HEK293 (cell line): ENCODE measurements at regions of chr9 and their contacts with region 1.

Region 1: DNA sequence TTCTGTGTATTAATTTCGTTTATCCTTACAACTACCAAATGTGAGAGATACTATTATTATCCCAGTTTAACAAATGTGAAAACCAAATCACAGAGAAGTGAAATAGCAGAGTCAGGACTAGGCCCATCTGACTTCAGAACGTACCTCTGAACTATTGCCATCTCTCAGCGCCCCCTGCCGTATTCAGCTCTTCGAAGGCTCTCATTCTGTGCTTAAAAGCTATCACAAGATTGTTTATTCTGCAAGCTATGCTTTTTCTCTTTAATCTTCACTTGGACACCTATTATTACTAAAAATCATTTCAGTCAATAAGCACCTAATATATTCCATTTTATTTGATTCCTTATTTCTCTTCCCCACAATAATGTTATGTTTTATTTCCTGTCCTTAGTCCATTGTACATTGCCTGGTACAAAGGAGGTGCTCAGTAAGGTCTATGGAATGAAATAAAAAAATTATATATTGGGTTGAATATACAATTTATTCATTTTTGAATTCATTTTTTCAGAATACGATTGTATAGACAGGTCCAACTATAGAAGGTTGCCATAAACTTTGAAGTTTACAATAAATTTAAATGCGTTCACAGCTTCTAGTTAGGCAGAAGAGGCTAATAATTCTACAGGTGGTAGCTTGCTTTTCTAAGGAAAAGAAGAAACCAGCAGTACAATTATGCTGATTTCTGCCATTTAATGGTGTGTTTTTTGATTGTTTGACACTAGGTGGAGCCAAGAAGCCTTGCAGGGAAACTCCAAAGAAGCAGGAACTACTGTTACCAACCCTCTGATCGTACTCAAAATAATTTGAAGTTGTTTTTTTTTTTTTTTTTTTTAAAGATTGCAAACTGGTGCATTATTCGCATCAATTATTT is 202.2 kb upstream of the DMRTA1 start:
- H3K4me3 ChIP-seq: no peak overlapping the region
- H3K27ac ChIP-seq: no peak overlapping the region
- H3K4me1 ChIP-seq: peaks cover 18% of the 10 kb centered on the region
- CTCF ChIP-seq: peak; percentile 22; the same call in 1 of the 2 replicates

Region 2: GRCh38 chr9:21709464-21710058 is 534.8 kb before region 1 on chr9:
- CTCF ChIA-PET with region 1: no interaction called
- POLR2A ChIA-PET with region 1: no interaction called
- H3K4me3 ChIP-seq: no peak overlapping the region
- H3K27ac ChIP-seq: no peak overlapping the region
- H3K4me1 ChIP-seq: no peaks in the 10 kb centered on the region
- CTCF ChIP-seq: 0 out of 2 replicates have a peak, but pooled peaks have one; percentile 14

Region 3: DNA sequence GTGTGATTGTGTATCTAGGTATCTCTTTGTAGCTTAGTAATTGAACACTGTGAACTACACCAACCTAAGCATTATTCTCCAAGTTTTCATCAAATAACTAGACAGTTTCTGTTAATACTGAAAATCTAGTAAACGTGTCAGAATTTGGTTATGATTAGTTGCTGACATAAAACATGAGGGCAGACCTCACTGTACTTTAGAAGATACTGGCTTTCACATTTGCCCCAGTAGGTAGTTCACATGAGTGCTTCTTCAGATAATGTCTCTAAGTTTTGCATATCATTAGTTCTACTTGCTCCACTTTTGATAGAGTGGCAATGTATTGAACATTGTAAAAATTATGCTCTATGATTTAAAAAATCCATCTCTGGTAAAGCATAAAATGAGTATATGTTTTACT is 242.3 kb before region 1 on chr9:
- CTCF ChIA-PET with region 1: interaction called, 65 read pairs
- POLR2A ChIA-PET with region 1: interaction called, 51 read pairs
- H3K4me3 ChIP-seq: no peak overlapping the region; the same call in 1 of the 2 replicates
- H3K27ac ChIP-seq: no peak overlapping the region
- H3K4me1 ChIP-seq: peaks cover 16% of the 10 kb centered on the region; the same call in 1 of the 2 replicates
- CTCF ChIP-seq: no peak

Region 4: GRCh38 chr9:22052376-22052945 is 191.9 kb before region 1 on chr9:
- CTCF ChIA-PET with region 1: interaction called, 29 read pairs
- POLR2A ChIA-PET with region 1: no interaction called
- H3K4me3 ChIP-seq: no peak overlapping the region
- H3K27ac ChIP-seq: peak overlapping the region; percentile 64
- H3K4me1 ChIP-seq: peaks cover 15% of the 10 kb centered on the region
- CTCF ChIP-seq: no peak

Region 5: DNA sequence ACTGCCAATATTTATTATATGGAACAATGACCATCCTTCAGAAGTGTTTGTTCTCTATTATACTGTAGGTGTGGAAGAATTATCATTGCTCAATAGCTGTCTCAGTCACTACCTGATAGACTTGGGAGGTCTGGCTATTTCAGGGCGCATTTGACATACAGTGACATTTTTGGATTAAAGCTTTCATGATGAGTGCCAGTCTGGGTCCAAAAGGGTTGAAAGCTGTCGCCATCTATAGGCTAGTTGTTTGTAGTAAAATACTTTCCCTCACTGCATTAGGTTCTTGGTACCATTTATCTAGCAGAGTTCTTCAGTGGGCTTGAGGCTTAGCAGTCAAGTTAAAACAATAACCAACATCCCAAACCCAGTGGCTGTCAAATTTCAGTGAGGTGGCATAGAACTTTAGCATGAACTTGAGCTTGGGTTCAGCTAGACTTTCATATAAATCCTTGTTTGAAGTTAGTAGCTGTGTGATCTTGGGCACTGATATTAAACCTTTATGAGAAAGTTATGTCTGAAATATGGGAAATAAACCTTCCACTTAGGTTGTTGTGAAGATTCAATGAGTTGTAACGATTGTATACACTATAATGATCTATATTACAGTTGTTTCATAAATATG is 124.7 kb before region 1 on chr9:
- CTCF ChIA-PET with region 1: interaction called, 46 read pairs
- POLR2A ChIA-PET with region 1: no interaction called
- H3K4me3 ChIP-seq: no peak overlapping the region
- H3K27ac ChIP-seq: no peak overlapping the region
- H3K4me1 ChIP-seq: peaks cover 14% of the 10 kb centered on the region; the same call in 1 of the 2 replicates
- CTCF ChIP-seq: no peak

Region 6: GRCh38 chr9:22175972-22176545 is 68.3 kb before region 1 on chr9:
- CTCF ChIA-PET with region 1: no interaction called
- POLR2A ChIA-PET with region 1: no interaction called
- H3K4me3 ChIP-seq: no peak overlapping the region
- H3K27ac ChIP-seq: no peak overlapping the region
- H3K4me1 ChIP-seq: no peaks in the 10 kb centered on the region; the same call in 1 of the 2 replicates
- CTCF ChIP-seq: no peak

Region 7: GRCh38 chr9:22211593-22212360 is 32.6 kb before region 1 on chr9:
- CTCF ChIA-PET with region 1: interaction called, 16 read pairs
- POLR2A ChIA-PET with region 1: interaction called, 4 read pairs
- H3K4me3 ChIP-seq: no peak overlapping the region
- H3K27ac ChIP-seq: 0 out of 2 replicates have a peak overlapping the region, but pooled peaks have one; percentile 30
- H3K4me1 ChIP-seq: peaks cover 30% of the 10 kb centered on the region
- CTCF ChIP-seq: no peak

Region 8: GRCh38 chr9:22265038-22265437 is 20.7 kb after region 1 on chr9:
- CTCF ChIA-PET with region 1: interaction called, 13 read pairs
- POLR2A ChIA-PET with region 1: no interaction called
- H3K4me3 ChIP-seq: no peak overlapping the region
- H3K27ac ChIP-seq: no peak overlapping the region
- H3K4me1 ChIP-seq: no peaks in the 10 kb centered on the region
- CTCF ChIP-seq: no peak

Region 9: DNA sequence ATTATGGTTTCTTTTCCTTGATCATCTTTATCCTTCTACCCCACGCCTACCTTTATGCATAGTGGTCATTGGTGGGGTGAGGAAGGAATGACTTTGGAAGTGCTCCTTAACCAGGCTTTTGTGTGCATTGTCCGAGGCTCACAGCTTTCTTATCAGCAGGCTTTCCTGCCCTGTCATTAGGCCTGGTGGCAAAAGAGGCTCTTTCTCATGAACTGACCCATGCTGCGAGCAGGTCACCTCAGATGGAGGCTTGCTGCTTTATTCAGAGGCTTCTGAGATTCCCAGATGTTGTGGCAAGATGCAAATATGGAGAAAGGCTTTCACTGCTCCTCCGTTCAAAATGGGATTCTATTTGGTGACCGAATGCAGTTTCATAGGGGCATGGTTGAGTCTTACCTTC is 144.9 kb after region 1 on chr9:
- CTCF ChIA-PET with region 1: no interaction called
- POLR2A ChIA-PET with region 1: no interaction called
- H3K4me3 ChIP-seq: no peak overlapping the region
- H3K27ac ChIP-seq: no peak overlapping the region
- H3K4me1 ChIP-seq: no peaks in the 10 kb centered on the region
- CTCF ChIP-seq: no peak

Region 10: GRCh38 chr9:22452415-22453010 is 208.1 kb after region 1 on chr9:
- CTCF ChIA-PET with region 1: interaction called, 29 read pairs
- POLR2A ChIA-PET with region 1: no interaction called
- H3K4me3 ChIP-seq: no peak overlapping the region
- H3K27ac ChIP-seq: no peak overlapping the region
- H3K4me1 ChIP-seq: no peaks in the 10 kb centered on the region
- CTCF ChIP-seq: no peak

Region 11: GRCh38 chr9:22539865-22540264 is 295.5 kb after region 1 on chr9:
- CTCF ChIA-PET with region 1: no interaction called
- POLR2A ChIA-PET with region 1: no interaction called
- H3K4me3 ChIP-seq: no peak overlapping the region
- H3K27ac ChIP-seq: no peak overlapping the region
- H3K4me1 ChIP-seq: no peaks in the 10 kb centered on the region
- CTCF ChIP-seq: no peak